CD8-positive, alpha-beta T cell (primary cell): ENCODE measurements at regions of chr4 and their contacts with region 1.

Region 1: GRCh38 chr4:106266201-106266600 is 49.8 kb downstream of the TBCK start:
- DNase-seq: peak in 2 of 9 experiments; percentile 7 to 18
- ATAC-seq: no peak
- H3K4me3 ChIP-seq: no peak overlapping the region
- H3K4me3 Mint-ChIP-seq: no peak overlapping the region
- H3K27ac ChIP-seq: no peak overlapping the region
- H3K27ac Mint-ChIP-seq: no peak overlapping the region
- H3K4me1 ChIP-seq: no peaks in the 10 kb centered on the region
- H3K4me1 Mint-ChIP-seq: peaks cover 6% of the 10 kb centered on the region
- H3K27me3 ChIP-seq: no peaks in the 10 kb centered on the region
- H3K27me3 Mint-ChIP-seq: no peaks in the 10 kb centered on the region
- CTCF ChIP-seq: no peak

Region 2: GRCh38 chr4:106503116-106504050 is 237.2 kb after region 1 on chr4:
- CTCF ChIA-PET with region 1: no interaction called
- POLR2A ChIA-PET with region 1: no interaction called
- intact Hi-C with region 1: loop called in 1 of 2 experiments (anchors 2 kb)
- DNase-seq: no peak
- ATAC-seq: no peak
- H3K4me3 ChIP-seq: no peak overlapping the region
- H3K4me3 Mint-ChIP-seq: no peak overlapping the region
- H3K27ac ChIP-seq: no peak overlapping the region
- H3K27ac Mint-ChIP-seq: no peak overlapping the region
- H3K4me1 ChIP-seq: no peaks in the 10 kb centered on the region
- H3K4me1 Mint-ChIP-seq: peaks cover 4% of the 10 kb centered on the region
- H3K27me3 ChIP-seq: no peaks in the 10 kb centered on the region
- H3K27me3 Mint-ChIP-seq: peaks cover 8% of the 10 kb centered on the region
- CTCF ChIP-seq: no peak

Region 3: GRCh38 chr4:106914223-106914622 is 648.0 kb after region 1 on chr4:
- CTCF ChIA-PET with region 1: no interaction called
- POLR2A ChIA-PET with region 1: no interaction called
- intact Hi-C with region 1: no loop called
- DNase-seq: no peak
- ATAC-seq: no peak
- H3K4me3 ChIP-seq: no peak overlapping the region
- H3K4me3 Mint-ChIP-seq: no peak overlapping the region
- H3K27ac ChIP-seq: no peak overlapping the region
- H3K27ac Mint-ChIP-seq: no peak overlapping the region
- H3K4me1 ChIP-seq: no peaks in the 10 kb centered on the region
- H3K4me1 Mint-ChIP-seq: no peaks in the 10 kb centered on the region
- H3K27me3 ChIP-seq: no peaks in the 10 kb centered on the region
- H3K27me3 Mint-ChIP-seq: no peaks in the 10 kb centered on the region
- CTCF ChIP-seq: no peak